H1 (cell line): ENCODE measurements at regions of chr17 and their contacts with region 1.

Region 1: DNA sequence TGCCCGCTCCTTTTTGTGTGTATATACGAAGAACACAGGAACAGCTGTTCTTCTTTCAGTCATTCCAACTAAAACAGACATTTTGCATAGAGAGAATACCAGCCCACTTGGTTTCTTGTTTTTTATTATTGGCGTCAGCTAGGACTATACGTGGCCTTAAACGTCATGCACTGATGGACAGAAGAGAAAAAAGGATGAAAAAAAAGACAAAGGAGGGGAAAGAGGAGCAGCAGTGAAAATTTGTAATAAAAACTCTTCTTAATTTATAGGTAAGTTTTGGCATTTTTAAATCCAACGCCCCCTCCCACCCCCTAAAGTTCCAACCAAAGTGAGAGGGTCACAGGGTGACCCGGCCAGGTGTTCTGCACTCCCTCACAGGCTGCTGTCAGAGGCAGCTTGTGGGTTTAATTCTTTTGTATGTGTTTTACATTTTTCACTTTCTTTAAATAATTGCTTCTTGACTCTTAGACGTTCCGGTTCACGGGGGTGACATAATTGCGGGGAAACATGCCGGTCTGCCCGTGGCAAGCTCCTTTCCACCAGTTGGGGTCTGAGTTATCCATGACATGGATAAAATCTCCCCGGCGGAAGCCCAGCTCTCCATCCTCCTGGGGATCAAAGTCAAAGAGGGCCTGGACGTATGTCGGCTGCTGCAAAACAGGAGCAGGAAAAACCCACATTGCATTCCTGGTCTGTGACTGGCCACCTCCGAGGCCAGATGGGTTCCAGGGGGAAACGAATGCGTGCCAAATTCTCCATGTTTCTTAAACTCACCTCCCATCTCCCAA is 30.9 kb upstream of the SLC25A19 start:
- DNase-seq: no peak
- H3K4me3 ChIP-seq: no peak overlapping the region
- H3K27ac ChIP-seq: no peak overlapping the region
- H3K4me1 ChIP-seq: peaks cover 0 to 5% (median under 1%) of the 10 kb centered on the region in 4 experiments; a peak in 3 of 7 replicates
- H3K27me3 ChIP-seq: no peaks in the 10 kb centered on the region
- CTCF ChIP-seq: no peak
- EP300 ChIP-seq: no peak
- POLR2A ChIP-seq: no peak
- RAD21 ChIP-seq: no peak

Region 2: DNA sequence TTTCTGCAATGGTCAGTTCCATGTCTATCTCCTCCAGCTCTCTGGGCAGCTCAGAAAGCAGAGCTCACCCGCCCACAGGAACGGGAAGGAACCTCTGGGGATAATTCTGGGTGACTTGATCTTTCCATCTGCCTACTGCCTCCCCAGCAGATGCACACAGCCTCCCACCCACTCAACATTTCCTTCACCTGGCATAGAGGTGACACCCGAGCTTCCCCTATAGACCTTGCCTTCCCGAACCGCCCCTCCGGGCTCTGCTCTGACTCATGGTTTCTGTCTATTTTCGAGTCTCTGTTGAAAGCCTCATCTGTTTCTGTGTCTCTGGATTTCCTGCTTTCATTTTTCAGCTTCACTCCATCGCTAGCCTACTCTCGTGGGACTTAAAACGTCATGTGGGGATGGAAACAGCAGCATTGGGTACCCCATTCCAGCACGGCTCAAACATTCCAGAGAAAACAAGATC is 70.1 kb before region 1 on chr17:
- CTCF ChIA-PET with region 1: no interaction called
- POLR2A ChIA-PET with region 1: no interaction called
- DNase-seq: no peak
- H3K4me3 ChIP-seq: no peak overlapping the region
- H3K27ac ChIP-seq: no peak overlapping the region
- H3K4me1 ChIP-seq: peaks cover 0 to 7% (median under 1%) of the 10 kb centered on the region in 4 experiments; a peak in 3 of 7 replicates
- H3K27me3 ChIP-seq: no peaks in the 10 kb centered on the region
- CTCF ChIP-seq: no peak
- EP300 ChIP-seq: no peak
- POLR2A ChIP-seq: no peak
- RAD21 ChIP-seq: no peak

Region 3: GRCh38 chr17:75300280-75300679 is 19.8 kb before region 1 on chr17:
- CTCF ChIA-PET with region 1: interaction called, 10 read pairs
- POLR2A ChIA-PET with region 1: interaction called, 4 read pairs
- DNase-seq: no peak
- H3K4me3 ChIP-seq: no peak overlapping the region
- H3K27ac ChIP-seq: no peak overlapping the region
- H3K4me1 ChIP-seq: no peaks in the 10 kb centered on the region
- H3K27me3 ChIP-seq: no peaks in the 10 kb centered on the region
- CTCF ChIP-seq: no peak
- EP300 ChIP-seq: no peak
- POLR2A ChIP-seq: no peak
- RAD21 ChIP-seq: no peak

Region 4: GRCh38 chr17:75331671-75332070 is 11.6 kb after region 1 on chr17:
- CTCF ChIA-PET with region 1: interaction called, 26 read pairs
- POLR2A ChIA-PET with region 1: interaction called, 7 read pairs
- DNase-seq: no peak
- H3K4me3 ChIP-seq: no peak overlapping the region
- H3K27ac ChIP-seq: no peak overlapping the region
- H3K4me1 ChIP-seq: peaks cover 0 to 10% (median 4%) of the 10 kb centered on the region in 4 experiments; a peak in 2 of 7 replicates
- H3K27me3 ChIP-seq: no peaks in the 10 kb centered on the region
- CTCF ChIP-seq: no peak
- EP300 ChIP-seq: no peak
- POLR2A ChIP-seq: no peak
- RAD21 ChIP-seq: no peak

Region 5: GRCh38 chr17:75345514-75346167 is 25.5 kb after region 1 on chr17:
- CTCF ChIA-PET with region 1: interaction called, 40 read pairs
- POLR2A ChIA-PET with region 1: interaction called, 15 read pairs
- DNase-seq: no peak
- H3K4me3 ChIP-seq: peak overlapping the region; percentile 21 to 53 (median 30); a peak in 6 of 8 replicates
- H3K27ac ChIP-seq: 0 out of 2 replicates have a peak overlapping the region, but pooled peaks have one; percentile 41
- H3K4me1 ChIP-seq: peaks cover 18 to 36% (median 31%) of the 10 kb centered on the region in 4 experiments
- H3K27me3 ChIP-seq: no peaks in the 10 kb centered on the region
- CTCF ChIP-seq: no peak
- EP300 ChIP-seq: no peak
- POLR2A ChIP-seq: no peak
- RAD21 ChIP-seq: no peak

Region 6: GRCh38 chr17:75370286-75370915 is 50.3 kb after region 1 on chr17:
- CTCF ChIA-PET with region 1: interaction called, 12 read pairs
- POLR2A ChIA-PET with region 1: interaction called, 4 read pairs
- DNase-seq: no peak
- H3K4me3 ChIP-seq: no peak overlapping the region
- H3K27ac ChIP-seq: no peak overlapping the region
- H3K4me1 ChIP-seq: peaks cover 0 to 9% (median 3%) of the 10 kb centered on the region in 4 experiments; a peak in 4 of 7 replicates
- H3K27me3 ChIP-seq: no peaks in the 10 kb centered on the region
- CTCF ChIP-seq: no peak
- EP300 ChIP-seq: no peak
- POLR2A ChIP-seq: no peak
- RAD21 ChIP-seq: no peak

Region 7: GRCh38 chr17:75393523-75394331 is 73.6 kb after region 1 on chr17:
- CTCF ChIA-PET with region 1: interaction called, 97 read pairs
- POLR2A ChIA-PET with region 1: interaction called, 8 read pairs
- DNase-seq: peak; percentile 95 to 98
- H3K4me3 ChIP-seq: peak overlapping the region; percentile 74 to 93 (median 82)
- H3K27ac ChIP-seq: peak overlapping the region; percentile 72
- H3K4me1 ChIP-seq: peaks cover 0 to 4% (median 0%) of the 10 kb centered on the region in 4 experiments; a peak in 1 of 7 replicates
- H3K27me3 ChIP-seq: no peaks in the 10 kb centered on the region
- CTCF ChIP-seq: no peak
- EP300 ChIP-seq: 0 out of 3 replicates have a peak, but pooled peaks of 1 of the 2 experiments have one; percentile 17
- POLR2A ChIP-seq: peak; percentile 61 to 87
- RAD21 ChIP-seq: peak in 1 of 2 experiments; percentile 6; a peak in 1 of 4 replicates